ENCODE measurements at regions of chr12 and their contacts with region 1.

Region 1: GRCh38 chr12:1594261-1595025 is at the start of gene FBXL14:
- DNase-seq: peak; percentile 95
- H3K4me3 ChIP-seq: peak within 1 kb of the TSS; percentile 71 to 93 (median 81)
- H3K27ac ChIP-seq: peak within 1 kb of the TSS; percentile 93 to 100 (median 96)
- H3K4me1 ChIP-seq: peaks cover 0 to 59% (median 44%) of the 10 kb centered on the region in 4 donors
- H3K27me3 ChIP-seq: no peaks in the 10 kb centered on the region
- CTCF ChIP-seq: no peak
- EP300 ChIP-seq: no peak
- POLR2A ChIP-seq: no peak
- total RNA-seq, gene FBXL14: 7.5 to 12.2 (median 10.0) TPM

Region 2: GRCh38 chr12:575948-576612 is 1018.4 kb before region 1 on chr12:
- intact Hi-C with region 1: loop called (anchors 10 kb)
- DNase-seq: peak; percentile 87
- H3K4me3 ChIP-seq: peak overlapping the region in 2 of 4 donors; percentile 12 to 13
- H3K27ac ChIP-seq: peak overlapping the region; percentile 52 to 64 (median 64)
- H3K4me1 ChIP-seq: peaks cover 0 to 34% (median 30%) of the 10 kb centered on the region in 4 donors
- H3K27me3 ChIP-seq: no peaks in the 10 kb centered on the region
- CTCF ChIP-seq: peak; percentile 94 to 99 (median 97)
- EP300 ChIP-seq: no peak
- POLR2A ChIP-seq: no peak